ENCODE measurements at regions of chr11 and their contacts with region 1.

Region 1: DNA sequence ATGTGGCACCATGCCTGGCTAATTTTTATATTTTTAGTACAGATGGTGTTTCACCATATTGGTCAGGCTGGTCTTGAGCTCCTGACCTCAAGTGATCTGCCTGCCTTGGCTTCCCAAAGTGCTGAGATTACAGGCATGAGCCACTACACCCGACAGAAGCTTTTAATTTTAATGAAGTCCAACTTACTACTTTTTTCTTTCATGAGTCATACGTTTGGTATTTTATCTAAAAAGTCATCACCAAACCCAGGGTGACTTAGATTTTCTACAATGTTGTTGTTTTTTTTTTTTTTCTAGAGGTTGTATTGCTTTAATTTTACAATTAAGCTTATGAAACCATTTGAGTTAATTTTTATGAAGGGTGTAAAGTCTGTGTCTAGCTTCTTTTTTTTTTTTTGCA is 34.9 kb downstream of the JRKL start:
- DNase-seq: no peak
- ATAC-seq: no peak
- H3K4me3 ChIP-seq: no peak overlapping the region
- H3K27ac ChIP-seq: no peak overlapping the region
- H3K4me1 ChIP-seq: no peaks in the 10 kb centered on the region
- H3K27me3 ChIP-seq: no peaks in the 10 kb centered on the region

Region 2: DNA sequence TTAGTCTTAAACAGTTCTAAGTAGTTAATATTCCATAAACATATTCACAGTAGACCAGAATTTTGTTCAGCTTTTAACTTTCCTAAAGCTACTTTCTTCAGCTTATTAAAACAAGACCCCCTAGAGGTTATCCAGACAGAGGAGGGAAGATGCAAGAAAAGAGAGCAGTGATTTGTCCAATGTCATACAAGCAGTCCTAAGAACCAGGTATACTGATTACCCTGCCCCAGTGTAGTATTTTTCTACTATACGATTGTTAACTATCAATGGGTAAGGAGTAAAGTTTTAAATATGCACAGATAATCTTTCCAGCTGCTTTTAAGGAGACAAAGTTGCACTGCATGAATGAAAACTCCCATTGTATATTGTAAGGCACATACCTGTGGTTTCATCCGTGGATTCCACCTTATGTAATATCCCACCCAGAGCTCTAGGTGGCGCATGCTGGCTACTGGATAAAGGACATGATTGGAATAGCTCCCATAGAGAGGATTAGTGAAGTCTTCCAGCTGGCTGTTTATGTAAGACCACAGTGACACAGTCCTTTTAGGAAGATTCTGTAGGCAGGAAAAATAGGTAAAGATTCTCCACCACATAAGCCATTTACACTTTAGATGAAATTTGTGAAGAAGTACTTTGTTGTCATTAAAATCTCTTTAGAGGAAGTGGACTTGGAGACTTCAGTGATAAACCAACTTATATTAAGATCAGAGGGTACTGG is 588.8 kb before region 1 on chr11:
- intact Hi-C with region 1: loop called (anchors 5 kb)
- DNase-seq: no peak
- ATAC-seq: peak; percentile 88
- H3K4me3 ChIP-seq: no peak overlapping the region
- H3K27ac ChIP-seq: no peak overlapping the region
- H3K4me1 ChIP-seq: peaks cover 0 to 1% of the 10 kb centered on the region in 2 donors
- H3K27me3 ChIP-seq: no peaks in the 10 kb centered on the region